B cell (primary cell): ENCODE measurements at regions of chr13 and their contacts with region 1.

Region 1: DNA sequence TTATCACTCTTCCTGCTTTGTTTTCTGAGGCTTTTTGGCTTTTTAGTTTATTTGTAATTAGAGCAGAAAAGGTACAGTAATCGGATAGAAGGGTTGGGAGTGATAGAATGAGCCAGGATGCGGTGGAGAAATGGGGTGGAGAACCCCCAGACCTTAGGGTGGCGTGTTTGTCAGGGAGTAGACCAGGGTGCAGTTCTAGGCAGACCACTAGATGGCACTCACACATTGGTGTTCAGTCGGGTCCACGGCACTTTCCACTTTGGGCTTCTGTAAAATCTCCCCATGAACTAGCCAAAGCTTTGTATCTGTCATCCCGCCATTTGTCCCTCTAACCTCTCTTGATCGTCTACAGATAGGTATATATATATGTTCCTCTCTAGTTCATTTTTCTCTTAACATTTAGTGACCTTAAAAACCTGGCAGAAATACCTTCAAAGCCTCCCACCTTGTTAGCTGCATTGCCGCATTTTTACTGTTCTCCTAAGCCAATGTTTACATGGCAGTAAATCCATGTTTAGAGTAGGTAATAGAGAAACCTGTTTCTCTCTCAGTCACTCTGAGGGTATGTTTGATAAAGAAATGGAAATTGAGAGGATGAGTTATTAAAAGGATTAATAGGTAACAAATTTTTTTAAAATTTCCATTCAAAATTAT is 154.9 kb downstream of the TM9SF2 start:
- DNase-seq: peak; percentile 77
- ATAC-seq: peak; percentile 75
- H3K4me3 ChIP-seq: no peak overlapping the region
- H3K4me3 Mint-ChIP-seq: peak overlapping the region; percentile 30
- H3K27ac ChIP-seq: no peak overlapping the region
- H3K27ac Mint-ChIP-seq: no peak overlapping the region
- H3K4me1 ChIP-seq: peaks cover 14 to 18% of the 10 kb centered on the region in 2 donors
- H3K4me1 Mint-ChIP-seq: peaks cover 23% of the 10 kb centered on the region
- H3K27me3 ChIP-seq: peaks cover 0 to 13% (median 10%) of the 10 kb centered on the region in 4 experiments
- H3K27me3 Mint-ChIP-seq: peaks cover 5% of the 10 kb centered on the region
- CTCF ChIP-seq: peak; percentile 90

Region 2: GRCh38 chr13:98959786-98960605 is 696.2 kb before region 1 on chr13:
- CTCF ChIA-PET with region 1: no interaction called
- POLR2A ChIA-PET with region 1: no interaction called
- intact Hi-C with region 1: no loop called
- DNase-seq: no peak
- ATAC-seq: no peak
- H3K4me3 ChIP-seq: no peak overlapping the region
- H3K4me3 Mint-ChIP-seq: no peak overlapping the region
- H3K27ac ChIP-seq: no peak overlapping the region
- H3K27ac Mint-ChIP-seq: no peak overlapping the region
- H3K4me1 ChIP-seq: no peaks in the 10 kb centered on the region
- H3K4me1 Mint-ChIP-seq: no peaks in the 10 kb centered on the region
- H3K27me3 ChIP-seq: no peaks in the 10 kb centered on the region
- H3K27me3 Mint-ChIP-seq: no peaks in the 10 kb centered on the region
- CTCF ChIP-seq: no peak

Region 3: GRCh38 chr13:99895223-99895994 is 239.2 kb after region 1 on chr13:
- CTCF ChIA-PET with region 1: interaction called, 5 read pairs
- POLR2A ChIA-PET with region 1: no interaction called
- intact Hi-C with region 1: loop called (anchors 5 kb)
- DNase-seq: peak; percentile 45
- ATAC-seq: no peak
- H3K4me3 ChIP-seq: peak overlapping the region; percentile 14 to 62 (median 52)
- H3K4me3 Mint-ChIP-seq: peak overlapping the region; percentile 81
- H3K27ac ChIP-seq: no peak overlapping the region
- H3K27ac Mint-ChIP-seq: no peak overlapping the region
- H3K4me1 ChIP-seq: peaks cover 13 to 17% of the 10 kb centered on the region in 2 donors
- H3K4me1 Mint-ChIP-seq: peaks cover 22% of the 10 kb centered on the region
- H3K27me3 ChIP-seq: peaks cover 0 to 63% (median 28%) of the 10 kb centered on the region in 4 experiments
- H3K27me3 Mint-ChIP-seq: peaks cover 63% of the 10 kb centered on the region
- CTCF ChIP-seq: no peak

Region 4: DNA sequence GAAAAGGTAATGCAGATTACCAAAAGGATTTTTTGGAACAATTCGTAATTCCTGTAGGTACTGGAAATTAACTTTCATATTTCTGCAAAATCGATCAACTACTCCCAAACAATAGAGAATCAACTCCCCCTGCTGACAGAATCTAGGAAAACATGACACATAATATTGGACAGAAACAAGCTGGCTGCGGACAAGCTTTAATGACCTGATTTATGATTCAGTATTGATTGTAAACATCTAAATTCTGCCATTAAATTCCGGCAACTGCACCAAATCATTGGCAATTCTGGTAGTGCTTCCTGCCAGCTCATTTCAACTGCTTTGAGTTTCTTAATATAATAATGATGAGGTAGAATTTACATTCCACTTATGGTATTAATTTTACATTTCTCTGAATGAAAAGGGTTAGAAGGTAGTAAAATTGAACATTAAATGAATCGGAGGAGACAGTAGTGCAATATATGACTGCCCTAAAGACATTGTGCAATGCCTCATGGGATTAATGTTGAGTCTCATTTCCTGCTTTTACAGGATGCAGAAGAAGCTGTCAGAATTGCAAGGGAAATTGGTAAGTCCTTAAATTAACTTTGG is 579.2 kb after region 1 on chr13:
- CTCF ChIA-PET with region 1: interaction called, 55 read pairs
- POLR2A ChIA-PET with region 1: no interaction called
- intact Hi-C with region 1: no loop called
- DNase-seq: peak; percentile 50
- ATAC-seq: no peak
- H3K4me3 ChIP-seq: no peak overlapping the region
- H3K4me3 Mint-ChIP-seq: peak overlapping the region; percentile 23
- H3K27ac ChIP-seq: no peak overlapping the region
- H3K27ac Mint-ChIP-seq: no peak overlapping the region
- H3K4me1 ChIP-seq: peaks cover 6 to 7% of the 10 kb centered on the region in 2 donors
- H3K4me1 Mint-ChIP-seq: peaks cover 6% of the 10 kb centered on the region
- H3K27me3 ChIP-seq: no peaks in the 10 kb centered on the region
- H3K27me3 Mint-ChIP-seq: no peaks in the 10 kb centered on the region
- CTCF ChIP-seq: peak; percentile 67

Region 5: DNA sequence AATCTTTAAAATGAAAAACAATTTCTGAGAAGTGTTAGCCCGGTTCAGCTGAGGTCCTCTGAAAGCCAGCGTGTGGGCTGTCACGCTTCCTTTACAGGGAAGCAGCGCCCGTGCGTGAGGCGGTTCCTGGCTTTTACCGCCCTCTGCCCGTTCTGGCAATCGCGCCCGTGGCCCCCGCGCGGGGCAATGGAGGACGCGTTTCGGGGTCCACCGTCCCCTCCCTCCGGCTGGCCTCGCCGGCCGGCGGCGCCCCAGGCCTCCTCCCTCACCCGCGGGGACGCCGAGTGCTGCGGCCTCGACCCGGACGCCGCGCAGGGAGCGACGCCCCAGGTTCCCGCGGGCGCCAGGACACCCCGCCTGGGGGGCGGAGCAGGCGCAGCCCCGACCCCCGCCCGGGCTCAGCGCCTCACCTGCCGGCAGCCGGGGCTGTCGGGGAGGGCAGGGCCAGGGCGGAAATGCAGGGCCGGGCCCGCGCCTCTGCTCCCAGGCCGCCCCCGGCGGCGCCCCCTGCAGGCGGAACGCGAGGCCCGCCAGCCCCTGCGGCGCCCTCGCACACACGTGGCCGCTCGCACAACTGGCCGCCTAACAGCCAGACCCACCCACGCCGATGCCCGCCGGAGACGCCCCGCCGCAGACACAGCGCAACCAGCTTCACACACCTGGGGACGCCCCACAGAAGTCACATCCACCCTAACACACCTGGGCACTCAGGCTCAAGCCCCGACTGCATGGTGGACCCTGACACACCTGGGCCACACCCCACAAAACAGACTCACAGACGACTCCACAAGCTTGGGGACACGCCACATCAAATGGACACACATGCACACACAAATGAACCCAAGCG is 932.3 kb after region 1 on chr13 and contains the start of gene GGACT:
- CTCF ChIA-PET with region 1: no interaction called
- POLR2A ChIA-PET with region 1: no interaction called
- intact Hi-C with region 1: loop called (anchors 5 kb)
- DNase-seq: peak; percentile 84
- ATAC-seq: peak; percentile 96
- H3K4me3 ChIP-seq: peak within 1 kb of the TSS; percentile 21 to 85 (median 55)
- H3K4me3 Mint-ChIP-seq: peak within 1 kb of the TSS; percentile 90
- H3K27ac ChIP-seq: peak within 1 kb of the TSS; percentile 42 to 74
- H3K27ac Mint-ChIP-seq: peak within 1 kb of the TSS; percentile 82
- H3K4me1 ChIP-seq: peaks cover 10 to 12% of the 10 kb centered on the region in 2 donors
- H3K4me1 Mint-ChIP-seq: peaks cover 20% of the 10 kb centered on the region
- H3K27me3 ChIP-seq: no peaks in the 10 kb centered on the region
- H3K27me3 Mint-ChIP-seq: no peaks in the 10 kb centered on the region
- CTCF ChIP-seq: peak; percentile 81
- total RNA-seq, gene GGACT: 2.9 and 3.5 TPM in 2 replicates